Gastrocnemius medialis (tissue), 4 donors: ENCODE measurements at regions of chr1 and their contacts with region 1.

Region 1: GRCh38 chr1:101309334-101310311 is 72.8 kb downstream of the S1PR1 start:
- DNase-seq: peak; percentile 18 to 19
- ATAC-seq: peak; percentile 58 to 73
- H3K4me3 ChIP-seq: peak overlapping the region; percentile 38 to 63 (median 52)
- H3K27ac ChIP-seq: no peak overlapping the region
- H3K4me1 ChIP-seq: peaks cover 5 to 7% of the 10 kb centered on the region in 2 donors
- H3K27me3 ChIP-seq: peaks cover 0 to 7% (median 0%) of the 10 kb centered on the region in 3 donors
- CTCF ChIP-seq: peak; percentile 28 to 81 (median 54)
- POLR2A ChIP-seq: no peak

Region 2: GRCh38 chr1:100950781-100951180 is 358.8 kb before region 1 on chr1:
- in situ Hi-C with region 1: no loop called
- intact Hi-C with region 1: no loop called
- DNase-seq: no peak
- ATAC-seq: no peak
- H3K4me3 ChIP-seq: no peak overlapping the region
- H3K27ac ChIP-seq: no peak overlapping the region
- H3K4me1 ChIP-seq: no peaks in the 10 kb centered on the region
- H3K27me3 ChIP-seq: no peaks in the 10 kb centered on the region
- CTCF ChIP-seq: no peak
- POLR2A ChIP-seq: no peak

Region 3: DNA sequence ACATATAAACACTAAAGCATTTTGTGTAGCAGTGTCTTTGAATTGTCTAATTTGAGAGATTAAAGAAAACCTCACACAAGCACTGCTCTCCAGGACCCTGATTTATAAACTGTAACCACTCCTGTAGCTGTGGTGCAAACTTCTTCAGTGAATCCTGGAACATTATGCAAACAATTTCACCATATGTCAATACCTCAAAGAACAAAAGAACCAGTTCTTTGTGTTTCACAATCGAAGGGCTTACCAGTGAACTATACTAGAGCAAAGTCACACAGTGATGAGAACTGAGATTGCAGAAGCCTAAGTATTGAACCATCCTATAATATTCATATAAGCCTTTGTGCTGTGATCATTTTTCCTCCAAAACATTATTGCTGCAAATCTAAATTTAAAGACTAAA is 305.6 kb before region 1 on chr1:
- in situ Hi-C with region 1: no loop called
- intact Hi-C with region 1: no loop called
- DNase-seq: no peak
- ATAC-seq: peak; percentile 24 to 75
- H3K4me3 ChIP-seq: no peak overlapping the region
- H3K27ac ChIP-seq: peak overlapping the region in 2 of 4 donors; percentile 3 to 21
- H3K4me1 ChIP-seq: peaks cover 8 to 27% of the 10 kb centered on the region in 2 donors
- H3K27me3 ChIP-seq: no peaks in the 10 kb centered on the region
- CTCF ChIP-seq: no peak
- POLR2A ChIP-seq: no peak

Region 4: GRCh38 chr1:101357444-101357986 is 47.9 kb after region 1 on chr1:
- in situ Hi-C with region 1: loop called in 1 of 4 experiments (anchors 5 kb)
- intact Hi-C with region 1: loop called (anchors 1 kb)
- DNase-seq: peak; percentile 13 to 21
- ATAC-seq: peak; percentile 83 to 90
- H3K4me3 ChIP-seq: no peak overlapping the region
- H3K27ac ChIP-seq: no peak overlapping the region
- H3K4me1 ChIP-seq: no peaks in the 10 kb centered on the region
- H3K27me3 ChIP-seq: no peaks in the 10 kb centered on the region
- CTCF ChIP-seq: peak; percentile 43 to 82 (median 62)
- POLR2A ChIP-seq: no peak